ENCODE measurements at regions of chrX and their contacts with region 1.

Region 1: GRCh38 chrX:19554786-19555185 is 39.5 kb upstream of the MAP3K15 start:
- DNase-seq: no peak
- H3K4me3 Mint-ChIP-seq: peak overlapping the region; percentile 12
- H3K27ac Mint-ChIP-seq: peak overlapping the region; percentile 58
- H3K4me1 Mint-ChIP-seq: peaks cover 47% of the 10 kb centered on the region
- H3K27me3 Mint-ChIP-seq: no peaks in the 10 kb centered on the region

Region 2: DNA sequence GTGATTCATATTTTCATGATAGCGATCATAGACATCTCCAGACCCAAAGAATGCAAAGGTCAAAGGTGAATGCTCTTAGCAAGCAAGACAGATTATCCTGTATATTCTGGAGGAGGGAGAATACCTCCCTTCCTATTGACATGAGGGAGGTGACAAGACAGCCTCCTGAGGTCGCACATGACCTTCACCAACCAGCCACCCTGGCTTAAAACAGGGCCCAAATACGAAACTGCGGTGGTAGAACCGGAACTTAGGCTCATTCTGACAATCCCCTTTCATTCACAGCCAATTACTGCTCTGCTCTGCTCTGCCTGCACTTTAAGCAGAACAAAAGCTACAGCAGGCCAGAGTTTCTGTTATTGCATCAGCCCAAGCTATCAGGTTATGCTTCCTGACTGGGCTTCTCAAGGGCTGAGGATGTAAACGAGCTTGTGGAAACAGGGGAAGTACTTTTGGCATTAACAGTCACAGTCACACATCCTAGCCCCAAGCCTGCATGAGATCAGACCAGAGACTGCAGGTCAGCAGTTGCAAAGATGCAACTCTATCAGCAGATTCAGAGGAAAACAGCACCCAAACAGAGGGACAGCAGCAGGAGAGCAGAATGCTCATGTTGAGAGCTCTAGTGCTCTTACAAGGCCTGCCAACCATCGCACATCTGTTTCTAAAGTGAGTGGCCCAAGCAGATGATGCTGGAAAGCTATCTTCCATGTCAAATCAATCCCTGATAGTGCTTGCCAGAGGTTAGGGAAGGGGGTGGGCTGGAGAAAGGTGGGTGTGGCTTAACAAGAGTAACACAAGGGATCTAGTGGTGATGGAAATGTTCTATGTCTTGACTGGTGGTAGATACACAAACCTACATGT is 11.8 kb after region 1 on chrX:
- intact Hi-C with region 1: loop called (anchors 1 kb)
- DNase-seq: peak; percentile 8
- H3K4me3 Mint-ChIP-seq: peak overlapping the region; percentile 7
- H3K27ac Mint-ChIP-seq: peak overlapping the region; percentile 89
- H3K4me1 Mint-ChIP-seq: peaks cover 37% of the 10 kb centered on the region
- H3K27me3 Mint-ChIP-seq: no peaks in the 10 kb centered on the region

Region 3: GRCh38 chrX:19571711-19572110 is 16.9 kb after region 1 on chrX:
- intact Hi-C with region 1: loop called (anchors 1 kb)
- DNase-seq: no peak
- H3K4me3 Mint-ChIP-seq: no peak overlapping the region
- H3K27ac Mint-ChIP-seq: peak overlapping the region; percentile 36
- H3K4me1 Mint-ChIP-seq: peaks cover 18% of the 10 kb centered on the region
- H3K27me3 Mint-ChIP-seq: no peaks in the 10 kb centered on the region

Region 4: DNA sequence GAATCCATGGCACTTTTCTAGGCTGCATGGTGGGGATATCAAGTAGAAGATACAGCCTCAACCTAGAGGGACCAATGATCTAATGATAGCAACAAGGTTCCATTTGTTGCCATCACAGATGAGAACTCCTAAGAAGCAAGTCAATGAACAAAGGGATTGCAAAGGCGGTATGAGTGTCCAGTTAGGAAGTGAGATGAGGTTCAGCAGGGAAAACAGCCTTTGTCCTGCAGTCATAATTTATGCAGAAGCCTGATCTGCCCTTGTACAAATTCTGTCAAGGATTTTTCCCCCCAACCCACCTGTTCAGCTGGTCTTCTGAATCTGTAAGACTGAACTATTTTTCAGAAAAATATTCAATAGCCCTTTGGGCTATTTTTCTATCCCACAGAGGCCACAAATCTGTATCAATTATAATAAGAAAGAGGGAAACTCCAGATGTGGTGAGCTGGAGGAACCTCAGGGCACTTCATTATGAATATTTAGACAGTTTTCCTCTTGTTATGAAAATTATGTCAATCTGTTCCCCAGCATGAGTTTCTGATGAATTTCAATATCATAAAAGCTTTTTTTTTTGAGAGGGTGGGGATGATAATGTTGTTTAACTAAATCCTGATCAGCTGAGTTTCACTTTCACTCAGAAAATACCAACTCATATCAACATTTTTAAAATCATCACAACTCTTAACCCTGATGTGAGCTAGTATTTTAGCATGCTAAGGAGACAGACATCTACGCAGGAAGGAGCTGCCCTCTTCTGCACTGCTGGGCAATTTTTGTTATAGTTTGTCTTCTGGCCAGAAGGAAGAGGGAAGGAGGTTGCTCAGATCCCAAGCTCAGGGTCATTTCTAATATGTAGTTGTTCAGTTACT is 87.7 kb after region 1 on chrX:
- intact Hi-C with region 1: loop called (anchors 1 kb)
- DNase-seq: no peak
- H3K4me3 Mint-ChIP-seq: peak overlapping the region; percentile 37
- H3K27ac Mint-ChIP-seq: peak overlapping the region; percentile 68
- H3K4me1 Mint-ChIP-seq: peaks cover 31% of the 10 kb centered on the region
- H3K27me3 Mint-ChIP-seq: no peaks in the 10 kb centered on the region

Region 5: GRCh38 chrX:19840899-19841648 is 286.3 kb after region 1 on chrX:
- intact Hi-C with region 1: loop called (anchors 2 kb)
- DNase-seq: peak; percentile 37
- H3K4me3 Mint-ChIP-seq: peak overlapping the region; percentile 41
- H3K27ac Mint-ChIP-seq: peak overlapping the region; percentile 85
- H3K4me1 Mint-ChIP-seq: peaks cover 41% of the 10 kb centered on the region
- H3K27me3 Mint-ChIP-seq: no peaks in the 10 kb centered on the region